Breast epithelium (tissue), 4 donors: ENCODE measurements at regions of chr11 and their contacts with region 1.

Region 1: DNA sequence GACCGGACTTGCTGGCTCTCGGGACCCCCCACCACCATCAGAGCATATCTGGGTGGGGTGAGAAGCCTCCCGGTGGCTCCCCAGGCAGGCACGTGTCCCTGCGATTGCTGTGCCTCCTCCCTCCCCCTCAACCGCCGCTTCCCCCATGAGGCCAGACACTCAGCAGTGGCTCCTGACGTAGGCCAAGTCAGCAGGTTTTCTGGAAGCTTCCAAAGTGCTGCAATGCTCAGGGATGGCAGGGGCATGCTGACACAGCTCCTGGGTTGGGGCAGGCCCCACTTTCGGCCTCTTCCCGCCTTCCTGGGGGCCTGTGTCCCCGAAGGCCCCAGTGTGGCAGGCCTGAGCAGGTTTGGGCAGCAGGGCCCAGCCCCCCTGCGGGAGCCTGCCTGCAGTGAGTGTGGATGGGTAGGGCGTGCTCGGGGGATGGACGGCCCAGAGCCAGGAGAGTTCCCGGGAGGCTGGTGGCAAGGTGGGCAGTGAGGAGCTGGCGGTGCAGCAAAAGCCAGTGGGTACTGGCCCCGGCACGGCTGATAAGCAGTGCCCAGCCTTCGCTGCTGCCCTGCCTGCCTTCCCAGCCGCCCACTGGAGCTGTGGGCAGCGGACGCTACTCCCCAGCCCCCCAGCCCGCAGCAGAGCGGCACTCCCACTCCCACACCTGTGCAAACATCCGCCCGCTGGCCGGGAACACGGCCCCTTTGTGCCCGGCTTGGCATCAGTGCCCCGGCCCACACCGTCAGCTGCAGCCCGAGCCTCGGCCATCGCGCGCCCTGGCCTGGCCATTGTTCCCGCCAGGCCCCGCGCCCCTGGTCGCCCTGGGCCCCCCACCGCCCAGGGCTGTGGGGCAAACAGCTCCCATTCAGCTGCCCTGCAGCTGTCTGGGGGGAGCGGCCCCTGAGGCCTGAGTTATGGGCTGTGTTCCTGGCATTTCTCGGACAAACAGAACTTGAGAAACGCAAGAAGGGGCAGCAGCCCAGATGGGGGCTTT is 125.0 kb downstream of the KCNQ1OT1 start:
- DNase-seq: peak; percentile 40 to 69
- H3K4me3 ChIP-seq: peak overlapping the region in 1 of 3 donors; percentile 35
- H3K27ac ChIP-seq: peak overlapping the region; percentile 33 to 68
- H3K4me1 ChIP-seq: no peaks in the 10 kb centered on the region
- H3K27me3 ChIP-seq: no peaks in the 10 kb centered on the region
- CTCF ChIP-seq: no peak
- POLR2A ChIP-seq: no peak

Region 2: DNA sequence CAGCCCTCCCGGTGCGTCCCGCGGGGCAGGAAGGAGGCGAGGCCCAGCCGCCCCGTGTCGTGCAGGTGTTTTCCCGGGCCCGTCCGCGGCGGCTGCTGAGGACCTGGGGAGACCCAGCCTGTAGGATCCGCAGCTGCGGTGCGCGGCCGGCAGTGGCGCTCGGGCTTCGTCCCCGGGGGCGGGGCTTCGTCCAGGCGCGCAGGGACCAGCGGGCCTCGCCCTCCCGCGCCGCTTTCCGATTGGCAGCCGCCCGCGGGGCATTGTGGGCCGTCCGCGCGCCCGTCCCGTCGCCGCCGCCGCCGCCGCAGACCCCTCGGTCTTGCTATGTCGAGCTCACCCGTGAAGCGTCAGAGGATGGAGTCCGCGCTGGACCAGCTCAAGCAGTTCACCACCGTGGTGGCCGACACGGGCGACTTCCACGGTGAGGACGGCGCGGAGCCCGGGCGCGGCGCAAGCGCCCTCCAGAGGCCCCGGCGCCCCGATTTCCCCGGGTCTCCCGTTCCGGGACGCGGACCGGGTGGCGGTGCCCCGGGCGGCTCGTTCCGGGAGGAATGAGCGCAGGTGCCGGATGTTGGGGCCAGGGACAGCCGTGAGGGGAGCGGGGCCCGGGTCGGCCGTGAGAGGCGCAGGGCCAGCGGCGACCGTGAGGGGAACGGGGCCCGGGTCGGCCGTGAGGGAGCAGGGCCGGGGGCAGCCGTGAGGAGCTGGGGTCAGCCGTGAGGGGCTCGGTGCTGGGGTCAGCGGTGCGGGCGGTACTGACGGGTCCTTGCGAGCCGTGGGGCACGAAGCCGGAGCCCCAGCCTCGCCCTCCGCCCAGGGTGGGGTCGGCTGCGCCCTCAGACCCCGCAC is 1827.5 kb before region 1 on chr11 and contains the start of gene TALDO1:
- intact Hi-C with region 1: loop called (anchors 5 kb)
- DNase-seq: peak; percentile 86 to 91
- H3K4me3 ChIP-seq: peak within 1 kb of the TSS; percentile 84 to 97 (median 89)
- H3K27ac ChIP-seq: peak within 1 kb of the TSS; percentile 81 to 84
- H3K4me1 ChIP-seq: peaks cover 0 to 9% of the 10 kb centered on the region in 2 donors
- H3K27me3 ChIP-seq: no peaks in the 10 kb centered on the region
- CTCF ChIP-seq: peak in 1 of 3 donors; percentile 24
- POLR2A ChIP-seq: no peak
- total RNA-seq, gene TALDO1: 137 to 239 (median 141) TPM

Region 3: GRCh38 chr11:2390725-2391151 is 184.1 kb before region 1 on chr11:
- intact Hi-C with region 1: no loop called
- DNase-seq: no peak
- H3K4me3 ChIP-seq: peak overlapping the region in 1 of 3 donors; percentile 25
- H3K27ac ChIP-seq: peak overlapping the region; percentile 69 to 85
- H3K4me1 ChIP-seq: peaks cover 30 to 48% of the 10 kb centered on the region in 2 donors
- H3K27me3 ChIP-seq: no peaks in the 10 kb centered on the region
- CTCF ChIP-seq: no peak
- POLR2A ChIP-seq: no peak